Activated T-helper 1 cell treated with anti-CD3 and anti-CD28 coated beads, Interleukin-12 subunit alpha, Interleukin-12 subunit beta, Interleukin-2, Interleukin-4 antibody, amounts not matched to agents 30 ng/mL and 10 ng/mL and 1 ng/mL, durations not matched to agents 14 hours and 24 hours and 36 hours (primary cell): ENCODE measurements at regions of chr2 and their contacts with region 1.

Region 1: GRCh38 chr2:190360561-190360960 is 17.2 kb downstream of the INPP1 start:
- DNase-seq: no peak
- H3K4me3 Mint-ChIP-seq: peak overlapping the region; percentile 81
- H3K27ac Mint-ChIP-seq: no peak overlapping the region
- H3K4me1 Mint-ChIP-seq: peaks cover 30% of the 10 kb centered on the region
- H3K27me3 Mint-ChIP-seq: no peaks in the 10 kb centered on the region

Region 2: DNA sequence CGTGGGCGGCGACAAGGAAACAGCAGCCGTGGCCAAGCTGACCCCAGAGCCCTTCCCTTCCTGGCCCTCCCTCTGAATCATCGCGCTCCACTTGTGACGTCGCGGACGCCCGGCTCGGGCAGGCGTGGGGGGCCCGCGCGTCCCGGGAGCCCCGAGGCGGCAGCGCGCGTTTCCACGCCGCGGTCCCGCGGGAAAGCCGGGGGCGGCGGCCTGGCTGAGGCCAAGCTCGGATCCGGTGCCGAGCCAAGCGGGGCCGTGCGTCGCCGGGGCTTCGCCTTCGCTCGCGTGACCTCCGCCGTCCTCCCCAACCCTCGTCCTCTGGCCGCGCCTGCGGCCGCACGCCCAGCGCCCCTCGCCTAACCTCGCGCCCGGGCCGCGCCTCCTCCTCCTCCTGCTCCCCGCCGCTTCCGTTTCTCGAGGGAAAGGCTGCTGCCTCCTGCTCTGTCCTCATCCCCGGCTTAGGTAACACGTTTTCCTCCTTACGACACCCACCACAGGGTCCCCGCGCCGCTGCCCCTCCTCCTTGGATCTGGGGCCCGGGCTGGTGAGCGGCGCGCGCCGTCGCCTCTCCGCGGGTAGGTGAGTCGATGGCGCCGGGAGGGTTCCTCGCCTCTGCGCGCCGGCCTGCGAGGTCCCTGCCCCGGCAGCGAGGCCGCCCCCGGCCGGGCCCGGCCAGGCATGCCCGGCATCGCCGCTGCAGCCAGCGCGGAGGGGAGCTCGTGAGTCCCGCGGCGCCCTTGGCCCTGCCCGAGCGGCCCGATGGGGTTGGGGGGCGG is 16.9 kb before region 1 on chr2 and contains the start of gene INPP1:
- intact Hi-C with region 1: loop called (anchors 1 kb)
- DNase-seq: peak; percentile 29
- H3K4me3 Mint-ChIP-seq: peak within 1 kb of the TSS; percentile 87
- H3K27ac Mint-ChIP-seq: peak within 1 kb of the TSS; percentile 88
- H3K4me1 Mint-ChIP-seq: peaks cover 27% of the 10 kb centered on the region
- H3K27me3 Mint-ChIP-seq: peaks cover 17% of the 10 kb centered on the region
- total RNA-seq, gene INPP1: 7.7 and 9.8 TPM in 2 replicates

Region 3: GRCh38 chr2:190379249-190379964 is 18.8 kb after region 1 on chr2:
- intact Hi-C with region 1: no loop called
- DNase-seq: no peak
- H3K4me3 Mint-ChIP-seq: no peak overlapping the region
- H3K27ac Mint-ChIP-seq: no peak overlapping the region
- H3K4me1 Mint-ChIP-seq: peaks cover 9% of the 10 kb centered on the region
- H3K27me3 Mint-ChIP-seq: peaks cover 2% of the 10 kb centered on the region